ENCODE measurements at regions of chr2 and their contacts with region 1.

Region 1: DNA sequence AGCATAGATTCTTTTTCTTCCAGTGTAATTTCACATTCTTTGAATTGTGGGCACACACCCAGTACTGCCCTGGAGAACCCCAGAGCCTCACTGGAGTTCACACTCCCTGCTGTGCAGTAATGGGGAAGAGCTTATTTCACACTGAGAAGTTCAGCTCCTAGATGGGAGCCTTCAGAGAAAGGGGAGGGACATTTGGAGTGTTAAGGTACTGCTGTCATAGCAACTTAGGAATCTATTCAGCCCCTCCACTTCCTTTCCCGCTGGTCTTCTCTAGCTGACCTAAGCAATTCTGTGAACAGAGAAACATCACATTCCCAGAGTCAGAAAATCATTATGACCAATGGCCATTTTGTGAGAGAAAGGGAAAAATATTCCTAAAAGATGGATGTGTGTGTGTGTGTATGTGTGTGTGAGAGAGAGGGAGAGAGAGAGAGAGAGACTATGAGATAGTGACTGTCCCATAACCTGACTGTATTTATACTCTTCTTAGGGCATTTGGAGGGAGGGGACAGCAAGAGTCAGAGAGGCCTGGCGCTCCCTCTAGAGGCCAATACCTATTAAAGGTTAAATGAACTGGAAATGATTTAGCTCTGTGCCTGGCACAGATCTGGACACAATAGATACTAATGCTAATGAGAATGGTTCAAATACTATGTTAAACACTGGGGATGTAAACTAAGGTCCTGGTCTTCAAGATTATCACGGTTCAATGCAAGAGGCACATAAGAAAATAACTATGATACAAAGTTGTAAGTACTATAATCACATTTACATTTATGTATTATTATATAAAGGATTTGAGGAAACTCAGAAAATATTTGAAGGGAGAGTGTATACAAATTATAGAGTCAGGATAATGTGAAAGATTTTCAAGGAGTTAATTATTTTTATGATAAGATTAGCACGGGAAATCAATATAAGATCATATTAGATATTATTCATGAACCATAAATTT is 41.5 kb upstream of the RPE start:
- DNase-seq: peak in 4 of 5 donors; percentile 13 to 21 (median 17)
- H3K4me3 ChIP-seq: no peak overlapping the region
- H3K4me3 Mint-ChIP-seq: no peak overlapping the region
- H3K27ac ChIP-seq: no peak overlapping the region
- H3K27ac Mint-ChIP-seq: no peak overlapping the region
- H3K4me1 ChIP-seq: no peaks in the 10 kb centered on the region
- H3K4me1 Mint-ChIP-seq: no peaks in the 10 kb centered on the region
- H3K27me3 ChIP-seq: no peaks in the 10 kb centered on the region
- H3K27me3 Mint-ChIP-seq: peaks cover 0 to 3% of the 10 kb centered on the region in 2 donors

Region 2: DNA sequence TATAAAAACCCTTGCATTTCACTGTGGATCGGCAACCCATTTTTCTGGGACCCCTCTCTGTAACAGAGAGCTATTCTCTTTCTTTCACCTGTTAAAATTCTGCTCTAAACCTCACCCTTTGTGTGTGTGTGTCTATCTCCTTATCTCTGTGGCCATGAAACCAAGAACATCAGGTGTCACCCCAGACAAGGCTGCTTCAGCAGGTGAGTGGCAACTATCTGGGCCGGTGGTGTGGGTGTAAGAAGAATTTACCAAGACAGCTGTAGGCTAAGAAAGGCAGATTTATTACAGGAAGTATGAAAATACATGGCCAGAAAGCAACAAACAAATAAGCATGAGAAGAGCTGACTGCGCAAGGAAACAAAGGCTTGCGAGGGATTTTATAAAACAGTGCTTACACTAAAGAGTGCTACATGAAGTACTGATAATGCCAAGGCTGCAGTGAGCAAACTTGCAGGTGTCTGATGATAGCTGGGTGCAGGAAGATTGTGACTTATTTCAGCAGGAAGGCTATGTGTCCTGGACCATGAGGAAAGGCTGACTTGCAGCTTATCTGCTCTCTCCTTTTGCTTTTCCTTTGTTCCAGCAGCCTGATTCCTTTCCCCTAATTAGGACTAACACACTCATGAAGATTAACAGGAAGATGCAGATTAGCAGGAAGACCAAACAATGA is 1133.3 kb before region 1 on chr2:
- CTCF ChIA-PET with region 1: no interaction called
- POLR2A ChIA-PET with region 1: no interaction called
- intact Hi-C with region 1: no loop called
- DNase-seq: no peak
- H3K4me3 ChIP-seq: no peak overlapping the region
- H3K4me3 Mint-ChIP-seq: no peak overlapping the region
- H3K27ac ChIP-seq: no peak overlapping the region
- H3K27ac Mint-ChIP-seq: no peak overlapping the region
- H3K4me1 ChIP-seq: no peaks in the 10 kb centered on the region
- H3K4me1 Mint-ChIP-seq: no peaks in the 10 kb centered on the region
- H3K27me3 ChIP-seq: no peaks in the 10 kb centered on the region
- H3K27me3 Mint-ChIP-seq: no peaks in the 10 kb centered on the region

Region 3: GRCh38 chr2:209942936-209943605 is 17.9 kb before region 1 on chr2:
- CTCF ChIA-PET with region 1: interaction called, 10 read pairs
- POLR2A ChIA-PET with region 1: no interaction called
- intact Hi-C with region 1: no loop called
- DNase-seq: no peak
- H3K4me3 ChIP-seq: no peak overlapping the region
- H3K4me3 Mint-ChIP-seq: no peak overlapping the region
- H3K27ac ChIP-seq: no peak overlapping the region
- H3K27ac Mint-ChIP-seq: no peak overlapping the region
- H3K4me1 ChIP-seq: no peaks in the 10 kb centered on the region
- H3K4me1 Mint-ChIP-seq: no peaks in the 10 kb centered on the region
- H3K27me3 ChIP-seq: no peaks in the 10 kb centered on the region
- H3K27me3 Mint-ChIP-seq: peaks cover 4 to 5% of the 10 kb centered on the region in 2 donors

Measured in CD4-positive, alpha-beta memory T cell (primary cell).